Activated T-helper 2 cell treated with anti-CD3 and anti-CD28 coated beads, Interferon-gamma antibody, Interleukin-2, Interleukin-4, amounts not matched to agents 10 μg/mL and 5 μg/mL and 100 μg/mL, durations not matched to agents 14 hours and 24 hours and 36 hours (primary cell): ENCODE measurements at regions of chr11 and their contacts with region 1.

Region 1: GRCh38 chr11:64916775-64917662 is at the start of gene ATG2A:
- DNase-seq: peak; percentile 98
- H3K4me3 Mint-ChIP-seq: peak within 1 kb of the TSS; percentile 89
- H3K27ac Mint-ChIP-seq: peak within 1 kb of the TSS; percentile 92
- H3K4me1 Mint-ChIP-seq: peaks cover 21% of the 10 kb centered on the region
- H3K27me3 Mint-ChIP-seq: no peaks in the 10 kb centered on the region
- total RNA-seq, gene ATG2A: 20.7 and 26.1 TPM in 2 replicates

Region 2: GRCh38 chr11:64846998-64847666 is 69.9 kb before region 1 on chr11:
- intact Hi-C with region 1: loop called (anchors 2 kb)
- DNase-seq: peak; percentile 81
- H3K4me3 Mint-ChIP-seq: no peak overlapping the region
- H3K27ac Mint-ChIP-seq: no peak overlapping the region
- H3K4me1 Mint-ChIP-seq: peaks cover 36% of the 10 kb centered on the region
- H3K27me3 Mint-ChIP-seq: no peaks in the 10 kb centered on the region

Region 3: DNA sequence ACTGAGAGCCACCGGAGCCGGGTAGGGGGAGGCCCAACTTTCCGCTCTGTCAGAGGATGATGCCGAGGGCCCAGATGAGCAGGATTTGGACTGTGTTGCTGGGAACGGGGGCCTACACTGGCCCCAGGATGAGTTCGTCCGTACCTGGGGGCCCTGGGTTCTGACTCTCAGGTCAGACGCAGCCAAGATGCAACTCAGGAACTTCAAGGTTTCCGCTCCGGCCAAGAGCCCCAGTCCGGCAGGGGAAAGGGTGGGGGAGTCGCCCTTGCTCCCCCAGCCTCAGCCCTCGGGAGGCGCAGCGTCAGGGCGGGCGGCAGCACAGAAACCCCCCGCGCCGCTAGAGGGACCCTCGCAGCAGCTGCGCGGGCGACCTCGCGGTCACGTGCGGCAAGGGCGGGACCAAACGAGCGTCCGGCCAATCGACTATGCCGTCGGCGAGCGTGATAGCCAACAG is 96.7 kb after region 1 on chr11:
- intact Hi-C with region 1: loop called (anchors 2 kb)
- DNase-seq: peak; percentile 83
- H3K4me3 Mint-ChIP-seq: peak overlapping the region; percentile 88
- H3K27ac Mint-ChIP-seq: peak overlapping the region; percentile 99
- H3K4me1 Mint-ChIP-seq: peaks cover 18% of the 10 kb centered on the region
- H3K27me3 Mint-ChIP-seq: no peaks in the 10 kb centered on the region

Region 4: GRCh38 chr11:65040847-65041621 is 124.0 kb after region 1 on chr11 and contains the start of gene SAC3D1:
- intact Hi-C with region 1: loop called (anchors 1 kb)
- DNase-seq: peak; percentile 94
- H3K4me3 Mint-ChIP-seq: peak within 1 kb of the TSS; percentile 88
- H3K27ac Mint-ChIP-seq: peak within 1 kb of the TSS; percentile 96
- H3K4me1 Mint-ChIP-seq: peaks cover 19% of the 10 kb centered on the region
- H3K27me3 Mint-ChIP-seq: no peaks in the 10 kb centered on the region
- total RNA-seq, gene SAC3D1: 17.0 and 18.6 TPM in 2 replicates